ENCODE measurements at regions of chr12 and their contacts with region 1.

Region 1: DNA sequence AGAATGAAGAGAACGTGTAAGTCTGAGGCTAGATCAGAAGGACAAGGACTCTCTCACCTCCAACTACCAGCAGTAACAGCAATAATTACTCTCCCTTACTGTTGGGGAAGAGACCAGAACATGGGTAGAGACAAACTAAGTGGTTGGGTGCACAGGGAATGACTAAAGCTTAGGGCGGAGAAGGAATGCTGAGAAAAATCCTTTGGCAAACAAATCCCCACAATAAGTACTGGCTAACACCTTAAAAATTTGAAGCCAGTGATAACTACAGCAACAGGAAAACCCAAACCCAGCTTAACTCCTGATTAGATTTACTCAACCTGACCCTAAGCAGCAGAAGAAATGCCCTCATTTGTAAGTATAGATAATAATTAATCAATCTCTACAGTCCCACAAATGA is 759.0 kb downstream of the AACS start:
- DNase-seq: no peak
- ATAC-seq: no peak
- H3K4me3 ChIP-seq: no peak overlapping the region
- H3K4me3 Mint-ChIP-seq: no peak overlapping the region
- H3K27ac ChIP-seq: no peak overlapping the region
- H3K27ac Mint-ChIP-seq: no peak overlapping the region
- H3K4me1 ChIP-seq: no peaks in the 10 kb centered on the region
- H3K4me1 Mint-ChIP-seq: no peaks in the 10 kb centered on the region
- H3K27me3 ChIP-seq: no peaks in the 10 kb centered on the region
- H3K27me3 Mint-ChIP-seq: no peaks in the 10 kb centered on the region
- CTCF ChIP-seq: no peak

Region 2: GRCh38 chr12:125773033-125773640 is 51.1 kb before region 1 on chr12:
- CTCF ChIA-PET with region 1: no interaction called
- POLR2A ChIA-PET with region 1: no interaction called
- intact Hi-C with region 1: loop called in 1 of 2 experiments (anchors 2 kb)
- DNase-seq: no peak
- ATAC-seq: no peak
- H3K4me3 ChIP-seq: no peak overlapping the region
- H3K4me3 Mint-ChIP-seq: no peak overlapping the region
- H3K27ac ChIP-seq: no peak overlapping the region
- H3K27ac Mint-ChIP-seq: no peak overlapping the region
- H3K4me1 ChIP-seq: no peaks in the 10 kb centered on the region
- H3K4me1 Mint-ChIP-seq: no peaks in the 10 kb centered on the region
- H3K27me3 ChIP-seq: no peaks in the 10 kb centered on the region
- H3K27me3 Mint-ChIP-seq: peaks cover 4% of the 10 kb centered on the region
- CTCF ChIP-seq: no peak